ENCODE measurements at regions of chr14 and their contacts with region 1.

Region 1: GRCh38 chr14:69708586-69709174 is 58.3 kb upstream of the SRSF5 start:
- DNase-seq: no peak
- H3K4me3 ChIP-seq: no peak overlapping the region
- H3K27ac ChIP-seq: no peak overlapping the region
- H3K4me1 ChIP-seq: peaks cover 22% of the 10 kb centered on the region
- H3K27me3 ChIP-seq: no peaks in the 10 kb centered on the region
- CTCF ChIP-seq: no peak
- POLR2A ChIP-seq: no peak

Region 2: DNA sequence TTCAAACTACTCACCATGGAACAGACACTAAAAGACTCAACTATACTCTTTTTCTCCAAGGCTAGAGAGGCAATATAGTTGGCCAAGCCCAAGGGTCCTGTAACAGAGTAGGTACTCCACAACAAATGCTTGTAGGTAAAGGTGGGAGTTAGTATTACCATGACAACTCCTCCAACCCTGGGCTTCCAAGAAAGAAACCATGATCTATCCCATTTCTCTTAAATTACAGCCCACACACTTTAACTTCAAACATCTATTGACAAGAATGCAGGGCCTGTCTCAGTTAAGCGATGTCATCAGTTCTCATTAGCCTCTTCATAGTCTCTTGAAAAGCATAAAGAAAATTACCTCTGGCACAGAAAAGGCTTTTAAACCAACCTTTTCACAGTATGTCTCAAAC is 335.6 kb before region 1 on chr14:
- CTCF ChIA-PET with region 1: no interaction called
- POLR2A ChIA-PET with region 1: no interaction called
- dilution Hi-C with region 1: no loop called
- intact Hi-C with region 1: no loop called
- DNase-seq: no peak
- H3K4me3 ChIP-seq: no peak overlapping the region
- H3K27ac ChIP-seq: no peak overlapping the region
- H3K4me1 ChIP-seq: no peaks in the 10 kb centered on the region
- H3K27me3 ChIP-seq: no peaks in the 10 kb centered on the region
- CTCF ChIP-seq: no peak
- POLR2A ChIP-seq: no peak

Region 3: DNA sequence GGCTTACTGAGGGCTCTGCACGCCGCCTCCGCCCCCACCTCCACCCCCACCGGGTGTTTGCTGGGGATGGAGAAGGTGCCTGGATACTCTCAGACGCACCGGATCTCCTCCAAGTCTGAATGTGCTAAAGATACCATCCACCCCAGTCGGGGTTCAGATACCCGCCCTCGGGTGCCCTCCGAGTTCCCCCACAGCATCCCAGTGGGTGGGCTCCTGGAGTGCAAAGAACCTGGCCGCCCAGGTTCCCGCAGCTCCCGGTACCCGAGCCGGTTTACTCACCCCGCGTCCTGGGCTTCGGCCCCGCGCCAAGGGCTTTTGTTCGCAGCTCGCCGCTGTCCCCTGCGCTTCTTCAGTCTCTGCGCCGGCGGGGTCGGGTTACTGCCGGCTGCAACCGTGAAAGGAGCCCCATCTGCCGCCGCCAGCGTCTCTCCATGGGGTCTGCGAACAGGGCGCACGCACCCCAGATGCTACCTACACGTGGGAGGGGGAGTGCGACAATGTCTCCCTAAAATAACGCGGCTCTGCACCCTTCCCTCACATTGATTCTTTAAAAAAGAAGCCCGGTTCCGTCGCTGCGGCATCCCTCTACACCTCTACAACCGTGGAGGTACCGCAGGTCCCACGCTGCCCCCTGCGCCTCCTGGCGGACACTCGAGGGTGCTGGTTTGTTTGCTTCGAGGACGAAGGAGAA is 134.3 kb before region 1 on chr14 and contains the start of gene CCDC177:
- CTCF ChIA-PET with region 1: no interaction called
- POLR2A ChIA-PET with region 1: no interaction called
- dilution Hi-C with region 1: no loop called
- intact Hi-C with region 1: no loop called
- DNase-seq: peak; percentile 51
- H3K4me3 ChIP-seq: no peak within 1 kb of the TSS
- H3K27ac ChIP-seq: no peak within 1 kb of the TSS
- H3K4me1 ChIP-seq: peaks cover 9% of the 10 kb centered on the region
- H3K27me3 ChIP-seq: peaks cover 53 to 78% of the 10 kb centered on the region in 2 experiments
- CTCF ChIP-seq: peak; percentile 77 to 84
- POLR2A ChIP-seq: no peak
- total RNA-seq, gene CCDC177: not detected in 2 replicates

Region 4: DNA sequence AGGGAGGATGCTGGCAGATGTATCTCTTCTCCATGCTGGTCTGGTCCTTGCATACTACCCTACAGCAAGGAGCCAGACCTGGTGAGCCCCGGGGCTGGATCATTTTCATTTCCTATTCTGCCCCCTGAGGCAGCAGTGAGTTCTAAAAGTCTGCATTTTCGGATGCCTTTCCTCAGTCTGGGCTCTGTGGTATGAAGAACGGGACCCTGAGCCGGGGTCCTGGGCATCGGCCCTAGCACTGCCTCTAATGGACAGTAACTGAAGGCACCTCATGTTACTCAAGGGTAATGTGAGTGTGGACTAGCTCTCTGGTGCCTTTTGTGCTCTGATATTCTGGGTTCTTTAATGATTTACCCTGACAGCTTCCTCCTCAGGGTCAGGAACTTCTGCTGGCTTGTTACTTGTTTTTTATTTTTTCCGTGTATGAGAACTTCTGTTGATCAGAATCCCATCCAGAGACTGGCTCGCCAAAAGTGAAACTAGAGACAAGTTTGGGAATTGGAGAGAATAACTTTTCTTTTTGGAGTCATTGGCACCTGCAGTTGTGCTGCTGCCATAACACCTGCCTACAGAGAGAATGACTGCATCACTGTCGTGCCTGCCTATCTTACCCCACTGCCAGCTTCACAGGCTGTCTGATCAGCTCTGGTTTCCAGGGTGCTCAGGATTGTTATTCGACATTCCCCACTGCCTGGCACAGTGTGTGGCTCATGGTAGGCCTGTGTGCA is 34.9 kb before region 1 on chr14:
- CTCF ChIA-PET with region 1: no interaction called
- POLR2A ChIA-PET with region 1: no interaction called
- dilution Hi-C with region 1: no loop called
- intact Hi-C with region 1: loop called (anchors 5 kb)
- DNase-seq: peak; percentile 47
- H3K4me3 ChIP-seq: no peak overlapping the region
- H3K27ac ChIP-seq: no peak overlapping the region
- H3K4me1 ChIP-seq: no peaks in the 10 kb centered on the region
- H3K27me3 ChIP-seq: no peaks in the 10 kb centered on the region
- CTCF ChIP-seq: no peak
- POLR2A ChIP-seq: no peak